Activated naive CD4-positive, alpha-beta T cell treated with anti-CD3 and anti-CD28 coated beads for 36 hours (primary cell): ENCODE measurements at regions of chr3 and their contacts with region 1.

Region 1: GRCh38 chr3:123559040-123559861 is 25.6 kb downstream of the HACD2 start:
- DNase-seq: no peak
- H3K4me3 Mint-ChIP-seq: no peak overlapping the region
- H3K27ac Mint-ChIP-seq: no peak overlapping the region
- H3K4me1 Mint-ChIP-seq: peaks cover 18% of the 10 kb centered on the region
- H3K27me3 Mint-ChIP-seq: no peaks in the 10 kb centered on the region

Region 2: DNA sequence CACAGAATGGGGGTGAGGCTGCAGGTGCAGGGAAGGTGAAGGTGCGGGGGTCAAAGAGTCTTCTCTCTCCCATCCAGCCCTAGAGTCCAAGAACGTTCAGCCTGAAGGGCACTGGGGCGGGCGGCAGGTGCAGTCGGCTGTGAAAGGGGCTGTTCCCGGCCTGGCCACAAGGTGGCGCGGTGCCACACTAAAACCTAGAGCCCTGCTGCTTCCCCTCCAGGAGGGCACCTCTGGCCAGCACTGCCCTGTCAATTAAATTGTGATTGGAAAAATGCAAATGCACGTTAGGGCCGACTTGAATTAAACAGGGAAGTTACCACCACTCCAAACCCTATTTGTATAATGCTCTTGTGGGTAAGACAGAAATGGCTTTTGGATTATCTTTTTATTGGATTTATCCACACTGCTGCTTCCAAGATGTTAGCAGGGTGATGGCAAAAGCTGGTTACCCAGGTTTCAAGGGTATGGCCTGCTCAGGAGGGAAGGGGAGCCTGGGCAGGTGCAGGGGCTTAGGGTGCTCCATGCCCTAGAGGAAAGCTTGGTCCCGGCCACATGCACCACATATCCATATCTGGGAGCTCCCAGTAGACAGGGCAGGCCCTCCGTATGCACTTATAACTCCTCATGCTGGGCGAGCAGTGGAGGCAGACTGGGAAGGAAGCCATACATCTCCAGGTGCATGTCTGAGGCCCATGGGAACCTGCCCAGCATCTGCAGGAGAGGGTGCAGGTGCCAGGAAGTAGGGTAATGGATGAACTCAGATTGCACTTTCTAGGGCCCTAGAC is 230.2 kb before region 1 on chr3:
- CTCF ChIA-PET with region 1: interaction called, 44 read pairs
- intact Hi-C with region 1: loop called (anchors 1 kb)
- DNase-seq: peak; percentile 80
- H3K4me3 Mint-ChIP-seq: no peak overlapping the region
- H3K27ac Mint-ChIP-seq: no peak overlapping the region
- H3K4me1 Mint-ChIP-seq: no peaks in the 10 kb centered on the region
- H3K27me3 Mint-ChIP-seq: no peaks in the 10 kb centered on the region

Region 3: GRCh38 chr3:123449102-123449996 is 109.9 kb before region 1 on chr3:
- CTCF ChIA-PET with region 1: interaction called, 7 read pairs
- intact Hi-C with region 1: loop called (anchors 2 kb)
- DNase-seq: no peak
- H3K4me3 Mint-ChIP-seq: no peak overlapping the region
- H3K27ac Mint-ChIP-seq: no peak overlapping the region
- H3K4me1 Mint-ChIP-seq: peaks cover 2% of the 10 kb centered on the region
- H3K27me3 Mint-ChIP-seq: peaks cover 49% of the 10 kb centered on the region

Region 4: GRCh38 chr3:123489400-123490004 is 69.7 kb before region 1 on chr3:
- CTCF ChIA-PET with region 1: interaction called, 20 read pairs
- intact Hi-C with region 1: loop called (anchors 2 kb)
- DNase-seq: peak; percentile 70
- H3K4me3 Mint-ChIP-seq: no peak overlapping the region
- H3K27ac Mint-ChIP-seq: no peak overlapping the region
- H3K4me1 Mint-ChIP-seq: no peaks in the 10 kb centered on the region
- H3K27me3 Mint-ChIP-seq: no peaks in the 10 kb centered on the region

Region 5: DNA sequence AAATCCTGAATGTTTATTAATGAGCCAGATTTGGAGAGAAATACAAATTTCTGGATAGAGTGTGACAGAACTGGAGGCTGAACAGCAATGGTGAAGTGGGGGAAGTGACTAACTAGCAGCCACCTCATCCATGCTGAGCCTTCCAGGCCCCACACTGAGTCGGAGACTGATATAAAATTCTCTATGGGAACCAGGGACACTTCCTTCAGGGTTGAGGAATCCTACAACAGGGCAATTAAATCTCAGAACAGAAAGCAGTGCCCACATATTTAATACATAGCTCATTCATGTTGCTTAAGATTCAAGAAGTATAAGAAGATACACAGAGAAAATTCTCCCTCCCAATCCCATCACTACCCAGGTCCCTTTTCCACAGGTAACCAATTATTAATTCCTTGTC is 23.7 kb before region 1 on chr3:
- CTCF ChIA-PET with region 1: interaction called, 17 read pairs
- intact Hi-C with region 1: loop called (anchors 1 kb)
- DNase-seq: no peak
- H3K4me3 Mint-ChIP-seq: no peak overlapping the region
- H3K27ac Mint-ChIP-seq: no peak overlapping the region
- H3K4me1 Mint-ChIP-seq: peaks cover 19% of the 10 kb centered on the region
- H3K27me3 Mint-ChIP-seq: no peaks in the 10 kb centered on the region

Region 6: GRCh38 chr3:123576122-123576521 is 16.9 kb after region 1 on chr3:
- CTCF ChIA-PET with region 1: interaction called, 10 read pairs
- intact Hi-C with region 1: loop called (anchors 1 kb)
- DNase-seq: peak; percentile 63
- H3K4me3 Mint-ChIP-seq: no peak overlapping the region
- H3K27ac Mint-ChIP-seq: peak overlapping the region; percentile 21
- H3K4me1 Mint-ChIP-seq: peaks cover 43% of the 10 kb centered on the region
- H3K27me3 Mint-ChIP-seq: no peaks in the 10 kb centered on the region